ENCODE measurements at regions of chr6 and their contacts with region 1.

Region 1: GRCh38 chr6:64330694-64331307 is 695.2 kb downstream of the PHF3 start:
- DNase-seq: peak; percentile 58
- H3K4me3 ChIP-seq: no peak overlapping the region
- H3K27ac ChIP-seq: no peak overlapping the region
- H3K4me1 ChIP-seq: no peaks in the 10 kb centered on the region
- H3K27me3 ChIP-seq: no peaks in the 10 kb centered on the region
- CTCF ChIP-seq: peak; percentile 69

Region 2: DNA sequence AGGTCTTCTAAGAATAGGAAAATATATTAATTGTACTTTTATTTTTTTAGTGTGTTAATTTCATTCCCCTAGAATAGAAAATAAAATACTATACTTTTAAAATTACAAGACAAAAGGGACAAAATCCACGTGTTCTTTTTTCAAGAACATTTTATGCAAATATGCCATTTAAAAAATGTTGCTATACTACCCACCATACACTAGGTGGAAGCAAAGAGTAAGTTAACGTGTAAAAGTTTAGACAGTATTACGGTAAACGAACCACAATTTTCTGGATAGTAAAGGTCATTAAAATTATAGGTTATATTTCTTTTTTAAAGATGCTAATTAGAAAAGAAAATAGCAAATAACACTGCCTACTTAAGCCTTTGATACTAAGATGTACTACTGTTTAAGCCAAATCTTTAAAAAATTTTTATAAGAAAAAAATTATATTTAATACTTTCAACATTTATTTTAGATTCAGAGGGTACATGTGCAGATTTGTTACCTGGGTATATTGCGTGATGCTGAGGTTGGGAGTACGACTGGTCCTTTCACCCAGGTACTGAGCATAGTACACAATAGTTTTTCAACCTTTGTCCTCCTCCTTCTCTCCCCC is 407.6 kb before region 1 on chr6:
- intact Hi-C with region 1: loop called (anchors 5 kb)
- DNase-seq: no peak
- H3K4me3 ChIP-seq: no peak overlapping the region
- H3K27ac ChIP-seq: no peak overlapping the region
- H3K4me1 ChIP-seq: peaks cover 6% of the 10 kb centered on the region
- H3K27me3 ChIP-seq: peaks cover 5% of the 10 kb centered on the region
- CTCF ChIP-seq: peak; percentile 75

Region 3: DNA sequence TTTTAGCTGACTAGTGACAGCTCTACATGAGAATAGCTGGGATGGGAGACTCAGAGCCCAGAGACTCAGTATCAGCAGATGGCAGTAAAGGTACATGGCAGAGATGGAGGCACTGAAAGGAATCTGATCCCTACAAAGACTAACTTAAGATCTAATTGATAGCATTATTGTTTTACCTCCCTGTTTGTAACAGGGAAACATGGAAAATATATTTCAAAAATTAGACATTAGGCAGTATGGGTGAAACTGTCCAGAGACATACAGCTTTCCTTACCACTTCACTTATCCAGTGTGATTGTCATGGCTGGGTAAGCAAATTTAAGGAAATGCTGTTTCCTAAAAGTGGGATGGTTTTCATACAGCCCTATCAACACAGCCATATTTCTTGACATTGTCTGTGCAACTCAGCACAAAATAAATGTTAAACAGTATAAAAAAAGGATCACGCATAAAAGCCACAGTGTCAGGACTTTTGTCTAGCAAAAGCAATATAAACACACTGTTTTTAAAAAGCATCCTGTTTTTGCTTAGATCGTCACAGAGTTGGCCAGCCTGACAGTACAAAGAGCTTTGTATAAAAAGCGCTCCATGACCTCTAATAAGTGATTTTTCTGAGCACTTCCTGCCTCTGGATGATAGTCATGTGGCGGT is 318.3 kb before region 1 on chr6:
- intact Hi-C with region 1: loop called (anchors 10 kb)
- DNase-seq: no peak
- H3K4me3 ChIP-seq: peak overlapping the region; percentile 24
- H3K27ac ChIP-seq: no peak overlapping the region
- H3K4me1 ChIP-seq: no peaks in the 10 kb centered on the region
- H3K27me3 ChIP-seq: no peaks in the 10 kb centered on the region
- CTCF ChIP-seq: peak; percentile 56

Measured in left ventricle myocardium inferior (tissue), 1 donor.